CD8-positive, alpha-beta T cell (primary cell): ENCODE measurements at regions of chr17 and their contacts with region 1.

Region 1: DNA sequence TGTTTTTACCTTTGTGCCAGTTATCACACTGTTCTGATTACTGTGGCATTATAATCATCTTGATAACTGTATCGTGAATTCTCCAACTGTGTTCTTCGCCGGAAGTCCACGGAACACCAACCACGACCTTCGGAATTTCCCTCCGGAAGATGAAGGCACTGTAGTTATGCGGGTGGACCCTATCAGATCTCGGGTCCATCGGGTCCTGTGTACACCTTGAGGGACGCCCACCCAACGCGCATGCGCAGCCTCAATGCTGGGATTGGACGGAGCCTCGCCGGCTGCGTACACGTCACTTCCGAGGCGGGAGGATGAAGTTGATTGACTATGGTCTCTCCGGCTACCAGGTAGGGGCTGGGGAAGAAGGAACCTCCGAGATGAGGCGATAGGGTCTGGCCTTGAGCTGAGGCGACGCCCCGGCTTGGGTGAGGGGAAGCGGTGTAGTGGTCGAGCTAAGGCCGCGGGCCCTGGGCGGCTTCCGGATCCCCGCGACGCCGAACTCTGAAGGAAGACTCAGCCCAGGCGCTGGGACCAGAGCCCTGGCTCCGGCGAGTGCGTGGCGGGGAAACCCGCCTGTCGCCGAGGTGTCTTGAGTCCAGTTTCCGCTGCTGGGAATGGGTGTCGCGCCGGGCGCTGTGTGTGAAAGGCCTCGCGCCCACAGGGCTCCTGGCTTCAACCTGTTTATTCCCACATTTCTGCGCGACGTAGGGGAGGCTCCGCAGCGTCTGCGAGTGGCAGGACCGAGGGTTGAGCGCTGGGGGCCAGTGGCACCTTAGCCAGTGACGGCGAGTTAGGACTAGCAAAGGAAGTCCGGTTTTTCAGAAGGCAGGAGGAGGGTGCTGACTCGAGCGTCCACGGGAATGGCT is at the start of gene DHRS7B:
- DNase-seq: peak; percentile 90 to 98 (median 97)
- ATAC-seq: peak; percentile 80
- H3K4me3 ChIP-seq: peak within 1 kb of the TSS; percentile 88 to 90
- H3K4me3 Mint-ChIP-seq: peak within 1 kb of the TSS; percentile 94
- H3K27ac ChIP-seq: peak within 1 kb of the TSS; percentile 87 to 94
- H3K27ac Mint-ChIP-seq: peak within 1 kb of the TSS; percentile 97
- H3K4me1 ChIP-seq: peaks cover 22% of the 10 kb centered on the region
- H3K4me1 Mint-ChIP-seq: peaks cover 38% of the 10 kb centered on the region
- H3K27me3 ChIP-seq: no peaks in the 10 kb centered on the region
- H3K27me3 Mint-ChIP-seq: no peaks in the 10 kb centered on the region
- CTCF ChIP-seq: no peak
- total RNA-seq, gene DHRS7B: 6.5 to 8.2 TPM

Region 2: GRCh38 chr17:19377602-19378392 is 1749.1 kb before region 1 on chr17:
- CTCF ChIA-PET with region 1: no interaction called
- POLR2A ChIA-PET with region 1: no interaction called
- intact Hi-C with region 1: loop called in 1 of 2 experiments (anchors 5 kb)
- DNase-seq: peak; percentile 82 to 98 (median 93)
- ATAC-seq: peak; percentile 89
- H3K4me3 ChIP-seq: peak overlapping the region; percentile 81 to 96
- H3K4me3 Mint-ChIP-seq: peak overlapping the region; percentile 100
- H3K27ac ChIP-seq: peak overlapping the region; percentile 81 to 86
- H3K27ac Mint-ChIP-seq: peak overlapping the region; percentile 96
- H3K4me1 ChIP-seq: peaks cover 6% of the 10 kb centered on the region
- H3K4me1 Mint-ChIP-seq: peaks cover 15% of the 10 kb centered on the region
- H3K27me3 ChIP-seq: no peaks in the 10 kb centered on the region
- H3K27me3 Mint-ChIP-seq: no peaks in the 10 kb centered on the region
- CTCF ChIP-seq: no peak

Region 3: GRCh38 chr17:21072745-21073197 is 54.1 kb before region 1 on chr17:
- CTCF ChIA-PET with region 1: no interaction called
- POLR2A ChIA-PET with region 1: no interaction called
- intact Hi-C with region 1: no loop called
- DNase-seq: no peak
- ATAC-seq: no peak
- H3K4me3 ChIP-seq: no peak overlapping the region
- H3K4me3 Mint-ChIP-seq: no peak overlapping the region
- H3K27ac ChIP-seq: no peak overlapping the region
- H3K27ac Mint-ChIP-seq: no peak overlapping the region
- H3K4me1 ChIP-seq: no peaks in the 10 kb centered on the region
- H3K4me1 Mint-ChIP-seq: no peaks in the 10 kb centered on the region
- H3K27me3 ChIP-seq: no peaks in the 10 kb centered on the region
- H3K27me3 Mint-ChIP-seq: no peaks in the 10 kb centered on the region
- CTCF ChIP-seq: no peak

Region 4: DNA sequence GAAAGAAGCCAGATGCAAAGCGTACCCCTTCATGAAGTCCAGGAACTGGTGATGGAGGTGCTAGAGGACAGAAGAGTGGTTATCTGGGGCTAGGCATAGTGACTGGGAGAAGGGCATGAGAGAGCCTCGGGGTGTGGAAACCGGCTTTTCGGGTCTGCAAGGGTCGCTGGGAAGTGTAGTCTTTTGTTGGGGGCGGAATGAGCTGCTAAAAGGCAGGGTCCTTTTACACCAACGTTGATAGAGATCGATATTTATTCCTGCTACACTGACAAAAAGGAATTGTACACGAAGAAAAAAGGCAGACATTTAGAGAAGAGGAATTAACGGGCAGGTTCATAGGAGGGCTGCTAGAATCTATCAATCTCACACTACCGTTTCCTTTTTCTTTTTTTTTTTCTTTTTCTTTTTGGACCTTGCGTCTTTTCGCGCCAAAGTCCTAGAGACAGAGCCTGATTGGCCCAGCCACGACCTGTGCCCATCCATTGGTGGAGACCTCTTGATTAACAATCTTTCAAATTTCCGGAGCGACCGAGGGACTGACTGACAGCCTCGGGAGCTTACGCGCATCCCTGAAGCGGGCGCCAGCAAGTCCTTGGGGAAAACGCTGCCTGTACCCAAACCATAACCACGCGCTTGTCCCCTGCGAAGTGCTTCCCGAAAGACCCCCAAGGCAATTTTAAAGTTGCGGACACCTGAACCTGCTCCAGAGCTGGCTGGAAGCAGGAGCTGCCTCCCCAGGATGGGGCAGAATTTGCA is 27.8 kb before region 1 on chr17:
- CTCF ChIA-PET with region 1: no interaction called
- POLR2A ChIA-PET with region 1: no interaction called
- intact Hi-C with region 1: loop called in 1 of 2 experiments (anchors 1 kb)
- DNase-seq: peak; percentile 22 to 85 (median 62)
- ATAC-seq: peak; percentile 97
- H3K4me3 ChIP-seq: peak overlapping the region; percentile 53 to 66
- H3K4me3 Mint-ChIP-seq: peak overlapping the region; percentile 93
- H3K27ac ChIP-seq: no peak overlapping the region
- H3K27ac Mint-ChIP-seq: no peak overlapping the region
- H3K4me1 ChIP-seq: peaks cover 12% of the 10 kb centered on the region
- H3K4me1 Mint-ChIP-seq: peaks cover 11% of the 10 kb centered on the region
- H3K27me3 ChIP-seq: no peaks in the 10 kb centered on the region
- H3K27me3 Mint-ChIP-seq: peaks cover 5% of the 10 kb centered on the region
- CTCF ChIP-seq: no peak

Region 5: GRCh38 chr17:21252796-21253645 is 126.1 kb after region 1 on chr17 and contains the start of gene NATD1:
- CTCF ChIA-PET with region 1: interaction called, 3 read pairs
- POLR2A ChIA-PET with region 1: no interaction called
- intact Hi-C with region 1: loop called (anchors 1 kb)
- DNase-seq: peak; percentile 54 to 92 (median 80)
- ATAC-seq: peak; percentile 79
- H3K4me3 ChIP-seq: peak within 1 kb of the TSS; percentile 55 to 73
- H3K4me3 Mint-ChIP-seq: peak within 1 kb of the TSS; percentile 86
- H3K27ac ChIP-seq: peak within 1 kb of the TSS; percentile 62 to 64
- H3K27ac Mint-ChIP-seq: peak within 1 kb of the TSS; percentile 92
- H3K4me1 ChIP-seq: peaks cover 17% of the 10 kb centered on the region
- H3K4me1 Mint-ChIP-seq: peaks cover 34% of the 10 kb centered on the region
- H3K27me3 ChIP-seq: no peaks in the 10 kb centered on the region
- H3K27me3 Mint-ChIP-seq: no peaks in the 10 kb centered on the region
- CTCF ChIP-seq: no peak
- total RNA-seq, gene NATD1: 6.3 to 6.6 TPM

Region 6: GRCh38 chr17:21284319-21285163 is 157.7 kb after region 1 on chr17 and contains the start of gene MAP2K3:
- CTCF ChIA-PET with region 1: interaction called, 10 read pairs
- POLR2A ChIA-PET with region 1: interaction called, 3 read pairs
- intact Hi-C with region 1: loop called (anchors 1 to 2 kb)
- DNase-seq: peak; percentile 84 to 97 (median 94)
- ATAC-seq: peak; percentile 65
- H3K4me3 ChIP-seq: peak within 1 kb of the TSS; percentile 78 to 81
- H3K4me3 Mint-ChIP-seq: peak within 1 kb of the TSS; percentile 94
- H3K27ac ChIP-seq: peak within 1 kb of the TSS; percentile 69 to 99
- H3K27ac Mint-ChIP-seq: peak within 1 kb of the TSS; percentile 96
- H3K4me1 ChIP-seq: peaks cover 45% of the 10 kb centered on the region
- H3K4me1 Mint-ChIP-seq: peaks cover 54% of the 10 kb centered on the region
- H3K27me3 ChIP-seq: no peaks in the 10 kb centered on the region
- H3K27me3 Mint-ChIP-seq: no peaks in the 10 kb centered on the region
- CTCF ChIP-seq: no peak
- total RNA-seq, gene MAP2K3: 59.9 to 63.8 TPM

Region 7: DNA sequence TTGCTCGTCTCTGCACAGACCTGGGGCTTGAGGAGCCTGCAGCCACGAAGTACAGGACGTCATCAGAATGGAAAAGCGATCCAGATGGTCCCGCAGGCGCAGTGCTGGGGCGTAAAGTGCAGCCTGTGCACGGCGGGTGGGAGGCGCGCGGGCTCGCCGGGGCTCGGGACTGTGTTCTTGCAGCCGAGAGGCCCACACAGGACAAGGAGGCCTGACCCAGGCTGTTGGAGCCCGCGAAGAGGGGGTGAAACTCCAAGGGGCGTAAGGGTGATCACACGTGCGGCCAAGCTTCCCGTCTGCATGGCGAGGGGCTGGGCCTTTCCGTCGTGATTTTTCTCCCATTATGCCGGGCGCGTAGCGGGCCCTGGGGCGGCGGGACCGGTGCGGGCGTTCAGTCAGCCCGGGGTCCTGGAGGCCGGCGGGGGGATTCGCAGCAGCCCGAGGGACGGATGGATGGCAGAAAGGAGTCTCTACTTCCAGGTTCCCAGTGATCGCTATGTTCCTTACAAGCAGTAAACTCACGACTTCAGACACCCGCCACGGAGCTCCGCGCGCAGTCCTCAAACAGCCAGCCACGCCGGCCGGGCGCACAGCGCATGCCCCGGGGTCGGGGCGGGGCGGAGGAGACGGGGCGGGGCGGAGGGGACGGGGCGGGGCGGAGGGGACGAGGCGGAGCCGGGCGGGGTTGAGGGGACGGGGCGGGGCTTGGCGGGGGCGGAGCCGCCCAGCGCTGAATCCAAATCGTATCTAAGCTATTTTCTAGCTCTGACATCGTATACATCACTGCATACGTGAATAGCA is 424.4 kb after region 1 on chr17:
- CTCF ChIA-PET with region 1: no interaction called
- POLR2A ChIA-PET with region 1: no interaction called
- intact Hi-C with region 1: loop called in 1 of 2 experiments (anchors 1 kb)
- DNase-seq: peak; percentile 67 to 89 (median 81)
- ATAC-seq: peak; percentile 94
- H3K4me3 ChIP-seq: peak overlapping the region; percentile 59 to 89
- H3K4me3 Mint-ChIP-seq: peak overlapping the region; percentile 86
- H3K27ac ChIP-seq: peak overlapping the region; percentile 18 to 66
- H3K27ac Mint-ChIP-seq: no peak overlapping the region
- H3K4me1 ChIP-seq: peaks cover 28% of the 10 kb centered on the region
- H3K4me1 Mint-ChIP-seq: peaks cover 35% of the 10 kb centered on the region
- H3K27me3 ChIP-seq: no peaks in the 10 kb centered on the region
- H3K27me3 Mint-ChIP-seq: peaks cover 13% of the 10 kb centered on the region
- CTCF ChIP-seq: no peak